ENCODE measurements at regions of chr5 and their contacts with region 1.

Region 1: GRCh38 chr5:39691993-39692392 is 267.2 kb upstream of the DAB2 start:
- DNase-seq: no peak
- H3K4me3 ChIP-seq: no peak overlapping the region
- H3K27ac ChIP-seq: no peak overlapping the region
- H3K4me1 ChIP-seq: no peaks in the 10 kb centered on the region
- H3K27me3 ChIP-seq: no peaks in the 10 kb centered on the region
- CTCF ChIP-seq: peak; percentile 27

Region 2: DNA sequence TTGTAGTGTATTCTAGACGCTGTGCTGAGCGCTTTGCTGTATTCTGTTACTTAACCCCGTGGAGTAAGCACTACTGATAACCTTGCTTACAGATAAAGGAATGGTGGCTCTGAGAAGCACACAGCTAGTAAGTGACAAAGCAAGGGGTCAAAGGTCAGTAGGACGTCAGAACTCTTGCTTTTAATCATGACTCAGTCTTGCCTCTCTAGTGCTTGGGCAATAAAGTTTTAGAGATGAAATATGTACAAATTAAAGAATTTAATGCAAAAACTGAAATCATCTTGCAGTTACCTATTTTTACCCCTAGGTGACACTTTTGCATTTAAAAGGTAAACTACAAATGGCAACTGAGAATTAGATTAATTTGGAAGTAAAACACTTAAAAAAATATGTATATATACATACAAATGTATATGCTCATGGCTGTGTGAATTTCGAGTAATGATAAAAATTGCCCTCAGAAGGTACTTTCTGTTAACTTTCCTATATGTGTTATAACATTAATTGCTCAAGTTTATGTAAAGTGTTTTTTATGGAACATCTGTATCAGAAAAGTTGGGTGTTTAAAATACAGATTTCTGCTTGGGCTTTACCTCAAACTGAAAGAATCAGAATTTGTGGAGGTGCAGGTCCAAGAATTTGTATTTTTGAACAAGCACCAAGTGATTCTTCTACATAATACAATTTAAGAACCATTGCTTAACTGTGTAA is 92.1 kb before region 1 on chr5:
- intact Hi-C with region 1: loop called (anchors 5 kb)
- DNase-seq: no peak
- H3K4me3 ChIP-seq: no peak overlapping the region
- H3K27ac ChIP-seq: peak overlapping the region; percentile 29
- H3K4me1 ChIP-seq: no peaks in the 10 kb centered on the region
- H3K27me3 ChIP-seq: no peaks in the 10 kb centered on the region
- CTCF ChIP-seq: peak; percentile 60

Measured in colonic mucosa (tissue), 4 donors.